Activated B cell treated with CpG ODN at 0.5 μM for 24 hours (primary cell): ENCODE measurements at regions of chr9 and their contacts with region 1.

Region 1: DNA sequence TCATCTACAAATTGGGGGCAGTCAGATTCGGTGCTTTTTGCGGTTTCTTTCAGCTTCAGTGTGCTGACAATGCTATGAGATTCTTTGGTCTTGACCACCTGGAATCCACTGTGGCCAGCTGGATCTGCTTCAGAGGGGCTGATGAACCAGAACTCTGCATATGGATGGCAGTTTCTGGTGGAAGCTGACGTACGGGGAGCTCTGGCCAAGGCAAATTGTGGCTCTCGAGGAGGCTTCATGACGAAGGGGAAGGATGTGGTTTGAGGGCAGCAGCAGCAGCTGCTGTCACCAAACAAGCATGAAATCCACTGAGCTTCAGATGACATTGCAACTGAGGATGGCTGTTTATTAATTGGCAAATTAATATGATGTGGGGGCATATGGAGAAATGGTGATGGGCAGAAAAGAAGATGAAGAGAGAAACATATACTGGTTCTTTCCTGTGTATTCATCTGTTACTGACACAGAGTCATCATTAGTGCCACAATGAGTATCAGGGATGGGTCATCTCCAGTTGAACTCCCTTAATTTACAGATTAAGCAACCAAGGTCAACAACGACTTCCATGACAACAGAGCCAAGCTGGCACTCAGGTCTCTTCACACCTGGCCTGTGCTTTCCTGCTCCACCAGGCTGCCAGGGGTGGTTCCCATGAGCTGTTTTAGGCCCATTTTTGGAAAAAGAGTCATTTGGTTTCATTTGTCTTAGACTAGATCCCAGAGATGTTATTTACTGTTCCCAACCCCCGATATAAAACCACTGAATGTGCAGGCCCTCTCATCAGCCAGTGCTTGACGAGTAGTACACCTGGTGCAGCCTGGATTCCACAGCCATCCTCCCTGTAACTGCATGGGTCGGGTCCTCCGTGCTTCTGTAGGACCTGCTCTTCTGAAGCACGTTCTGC is 134.7 kb downstream of the AOPEP start:
- DNase-seq: peak; percentile 44
- ATAC-seq: peak; percentile 86
- H3K4me3 Mint-ChIP-seq: peak overlapping the region; percentile 58
- H3K27ac Mint-ChIP-seq: peak overlapping the region; percentile 47
- H3K4me1 Mint-ChIP-seq: peaks cover 42% of the 10 kb centered on the region
- H3K27me3 Mint-ChIP-seq: no peaks in the 10 kb centered on the region
- CTCF ChIP-seq: no peak

Region 2: GRCh38 chr9:93223260-93224180 is 1637.7 kb before region 1 on chr9:
- CTCF ChIA-PET with region 1: no interaction called
- POLR2A ChIA-PET with region 1: no interaction called
- intact Hi-C with region 1: no loop called
- DNase-seq: no peak
- ATAC-seq: no peak
- H3K4me3 Mint-ChIP-seq: no peak overlapping the region
- H3K27ac Mint-ChIP-seq: no peak overlapping the region
- H3K4me1 Mint-ChIP-seq: peaks cover 16% of the 10 kb centered on the region
- H3K27me3 Mint-ChIP-seq: peaks cover 4% of the 10 kb centered on the region
- CTCF ChIP-seq: no peak

Region 3: GRCh38 chr9:94882966-94883641 is 21.9 kb after region 1 on chr9:
- CTCF ChIA-PET with region 1: no interaction called
- POLR2A ChIA-PET with region 1: interaction called, 15 read pairs
- intact Hi-C with region 1: loop called (anchors 1 kb)
- DNase-seq: no peak
- ATAC-seq: no peak
- H3K4me3 Mint-ChIP-seq: no peak overlapping the region
- H3K27ac Mint-ChIP-seq: no peak overlapping the region
- H3K4me1 Mint-ChIP-seq: peaks cover 29% of the 10 kb centered on the region
- H3K27me3 Mint-ChIP-seq: no peaks in the 10 kb centered on the region
- CTCF ChIP-seq: no peak

Region 4: GRCh38 chr9:95317119-95317892 is 456.1 kb after region 1 on chr9 and contains the start of gene FANCC:
- CTCF ChIA-PET with region 1: no interaction called
- POLR2A ChIA-PET with region 1: no interaction called
- intact Hi-C with region 1: loop called (anchors 1 kb)
- DNase-seq: peak; percentile 89
- ATAC-seq: peak; percentile 84
- H3K4me3 Mint-ChIP-seq: peak within 1 kb of the TSS; percentile 92
- H3K27ac Mint-ChIP-seq: peak within 1 kb of the TSS; percentile 91
- H3K4me1 Mint-ChIP-seq: peaks cover 15% of the 10 kb centered on the region
- H3K27me3 Mint-ChIP-seq: peaks cover 10% of the 10 kb centered on the region
- CTCF ChIP-seq: no peak
- total RNA-seq, gene FANCC: 10.4 and 11.4 TPM in 2 replicates